Left cardiac atrium (tissue), 4 donors: ENCODE measurements at regions of chr20 and their contacts with region 1.

Region 1: GRCh38 chr20:55415567-55416142 is 589.7 kb downstream of the CBLN4 start:
- DNase-seq: no peak
- ATAC-seq: no peak

Region 2: GRCh38 chr20:55140631-55141030 is 275.0 kb before region 1 on chr20:
- intact Hi-C with region 1: no loop called
- DNase-seq: no peak
- ATAC-seq: peak; percentile 23 to 32

Region 3: DNA sequence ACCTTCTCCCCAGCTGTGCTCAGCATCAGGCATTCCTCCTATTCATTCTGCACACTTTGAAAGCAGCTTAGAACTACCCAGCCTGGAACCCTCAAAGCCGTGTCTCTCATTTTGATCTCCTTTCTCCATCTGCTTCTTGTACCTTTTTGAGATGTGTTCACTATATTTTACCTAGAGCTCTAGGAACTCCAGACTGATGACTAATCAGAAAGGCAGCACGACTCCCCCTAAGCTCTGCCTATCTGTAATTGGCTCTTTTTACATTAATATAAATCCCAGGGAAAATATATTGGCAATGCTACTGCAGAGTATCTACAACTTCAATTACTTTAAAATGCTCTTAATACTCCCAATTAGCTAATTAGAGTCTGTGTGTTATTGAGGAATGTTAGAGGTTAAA is 81.9 kb before region 1 on chr20:
- intact Hi-C with region 1: no loop called
- DNase-seq: no peak
- ATAC-seq: peak in 1 of 2 donors; percentile 44

Region 4: GRCh38 chr20:55684578-55684977 is 268.9 kb after region 1 on chr20:
- intact Hi-C with region 1: no loop called
- DNase-seq: peak; percentile 19
- ATAC-seq: peak; percentile 41 to 67

Region 5: DNA sequence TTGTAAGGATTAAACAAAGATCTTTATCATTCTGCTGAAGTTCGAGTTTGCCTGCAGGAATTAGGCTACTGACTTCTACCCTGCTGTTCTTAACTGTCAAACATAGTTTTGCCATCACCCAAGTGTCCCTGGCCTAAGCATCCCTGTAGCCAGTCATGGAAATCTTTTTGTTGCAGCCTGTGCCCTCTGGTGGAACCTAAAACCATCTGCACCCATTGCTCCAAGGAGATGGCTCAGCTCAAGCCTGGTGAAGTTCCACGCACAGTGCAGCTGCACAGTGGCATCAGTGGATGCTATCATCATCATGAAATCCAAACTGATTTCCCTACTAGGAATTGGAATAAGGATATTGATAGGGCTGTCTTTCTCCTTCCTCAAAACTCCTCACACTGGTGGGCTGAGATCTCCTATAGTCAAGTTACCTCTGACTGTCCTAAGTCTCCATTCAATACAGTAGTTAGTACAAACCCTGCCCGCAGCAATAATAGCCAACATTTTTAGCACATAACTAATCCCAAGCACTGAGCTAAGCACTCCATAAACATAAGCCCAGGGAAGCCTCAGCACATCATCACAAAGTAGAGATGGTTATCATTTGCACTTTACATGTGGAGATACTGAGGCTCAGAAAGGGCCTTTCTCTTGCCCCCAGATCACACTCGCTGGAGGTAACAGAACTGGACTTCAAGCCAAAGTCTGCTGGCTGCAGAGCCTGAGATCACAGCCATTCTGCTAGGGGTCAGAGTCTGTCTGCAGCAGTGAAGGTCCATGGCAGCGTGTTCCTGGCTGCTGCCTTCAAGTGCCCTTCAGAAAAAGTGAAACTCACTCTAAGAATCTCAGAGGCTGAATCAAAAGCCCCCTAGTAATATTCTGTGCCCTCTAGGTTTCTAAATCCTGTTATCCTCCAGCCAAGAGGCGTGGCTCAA is 755.7 kb after region 1 on chr20:
- intact Hi-C with region 1: loop called in 1 of 2 experiments (anchors 10 kb)
- DNase-seq: no peak
- ATAC-seq: peak in 1 of 2 donors; percentile 53